ENCODE measurements at regions of chr1 and their contacts with region 1.

Region 1: GRCh38 chr1:103197216-103197615 is 88.9 kb upstream of the COL11A1 start:
- DNase-seq: no peak

Region 2: DNA sequence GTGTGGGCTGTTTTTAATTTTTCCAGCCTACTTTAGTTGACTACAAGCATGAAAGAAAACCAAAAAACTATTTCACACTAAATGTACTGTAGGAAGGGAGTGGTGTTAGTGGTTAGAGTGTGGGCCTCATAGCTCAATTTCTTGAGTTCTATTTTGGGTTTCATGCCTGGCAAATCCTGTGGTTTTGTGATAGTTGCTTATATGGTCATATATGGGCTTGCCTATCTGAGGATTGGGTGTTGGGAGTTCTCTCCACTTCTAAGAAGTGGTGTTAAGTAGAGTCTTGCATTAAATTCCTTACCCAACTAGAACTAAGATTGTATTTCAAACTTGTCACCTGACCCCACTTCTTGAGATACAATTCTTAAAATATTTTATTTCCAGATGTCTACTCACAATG is 51.0 kb before region 1 on chr1:
- intact Hi-C with region 1: loop called in 1 of 2 experiments (anchors 2 kb)
- DNase-seq: no peak

Measured in posterior vena cava (tissue), 2 donors.